Activated naive CD4-positive, alpha-beta T cell treated with anti-CD3 and anti-CD28 coated beads for 36 hours (primary cell): ENCODE measurements at regions of chr11 and their contacts with region 1.

Region 1: GRCh38 chr11:355581-356458 is 13.5 kb upstream of the B4GALNT4 start:
- DNase-seq: peak; percentile 93
- H3K4me3 Mint-ChIP-seq: peak overlapping the region; percentile 94
- H3K27ac Mint-ChIP-seq: peak overlapping the region; percentile 99
- H3K4me1 Mint-ChIP-seq: peaks cover 36% of the 10 kb centered on the region
- H3K27me3 Mint-ChIP-seq: no peaks in the 10 kb centered on the region

Region 2: GRCh38 chr11:199004-199581 is 156.7 kb before region 1 on chr11:
- CTCF ChIA-PET with region 1: no interaction called
- intact Hi-C with region 1: no loop called
- DNase-seq: no peak
- H3K4me3 Mint-ChIP-seq: no peak overlapping the region
- H3K27ac Mint-ChIP-seq: no peak overlapping the region
- H3K4me1 Mint-ChIP-seq: peaks cover 35% of the 10 kb centered on the region
- H3K27me3 Mint-ChIP-seq: no peaks in the 10 kb centered on the region

Region 3: GRCh38 chr11:304915-305843 is 50.6 kb before region 1 on chr11:
- CTCF ChIA-PET with region 1: interaction called, 81 read pairs
- intact Hi-C with region 1: loop called (anchors 1 kb)
- DNase-seq: peak; percentile 85
- H3K4me3 Mint-ChIP-seq: no peak overlapping the region
- H3K27ac Mint-ChIP-seq: no peak overlapping the region
- H3K4me1 Mint-ChIP-seq: peaks cover 38% of the 10 kb centered on the region
- H3K27me3 Mint-ChIP-seq: peaks cover 8% of the 10 kb centered on the region

Region 4: GRCh38 chr11:313787-314547 is 41.9 kb before region 1 on chr11 and contains the start of gene IFITM1:
- CTCF ChIA-PET with region 1: interaction called, 16 read pairs
- intact Hi-C with region 1: loop called (anchors 1 kb)
- DNase-seq: peak; percentile 77
- H3K4me3 Mint-ChIP-seq: peak within 1 kb of the TSS; percentile 93
- H3K27ac Mint-ChIP-seq: peak within 1 kb of the TSS; percentile 95
- H3K4me1 Mint-ChIP-seq: peaks cover 22% of the 10 kb centered on the region
- H3K27me3 Mint-ChIP-seq: no peaks in the 10 kb centered on the region
- total RNA-seq, gene IFITM1: 359 to 378 TPM

Region 5: DNA sequence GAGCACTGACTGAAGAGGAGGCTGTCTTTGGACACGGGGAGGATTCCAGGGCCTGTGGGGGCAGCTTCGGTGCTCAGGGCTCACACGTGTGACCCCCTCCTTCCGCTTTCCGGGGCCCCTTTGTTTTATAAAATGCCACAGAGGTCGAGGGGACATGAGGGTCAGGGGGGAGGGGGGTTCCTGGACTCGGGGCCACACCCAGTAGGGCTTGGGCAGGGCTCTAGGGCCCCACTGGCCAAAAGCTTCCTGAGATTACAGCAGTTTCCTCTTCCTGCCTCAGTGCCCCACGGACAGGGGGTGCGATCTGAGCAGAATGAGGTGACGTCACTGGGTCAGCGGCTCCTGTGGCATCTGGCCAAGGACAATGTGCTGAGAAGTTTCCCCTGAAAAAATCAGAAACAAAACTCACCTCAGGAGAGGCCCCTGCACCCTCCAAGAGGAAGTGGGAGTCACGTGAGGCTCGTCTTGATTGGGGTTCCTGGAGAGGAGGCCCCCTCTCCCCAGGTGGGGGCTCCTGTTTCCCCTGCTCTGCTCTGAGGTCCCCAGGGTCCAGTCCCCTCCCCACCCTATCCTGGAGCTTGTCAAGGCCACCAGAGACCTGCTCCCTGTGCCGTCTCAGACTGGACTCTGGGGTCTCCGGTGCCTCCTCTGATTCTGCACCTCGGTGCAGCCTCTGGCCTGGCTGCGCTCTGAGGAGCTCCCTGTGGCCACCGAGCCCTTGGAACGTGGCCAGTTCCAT is 28.8 kb before region 1 on chr11:
- CTCF ChIA-PET with region 1: interaction called, 13 read pairs
- intact Hi-C with region 1: loop called (anchors 1 kb)
- DNase-seq: peak; percentile 92
- H3K4me3 Mint-ChIP-seq: peak overlapping the region; percentile 72
- H3K27ac Mint-ChIP-seq: peak overlapping the region; percentile 98
- H3K4me1 Mint-ChIP-seq: peaks cover 73% of the 10 kb centered on the region
- H3K27me3 Mint-ChIP-seq: no peaks in the 10 kb centered on the region

Region 6: DNA sequence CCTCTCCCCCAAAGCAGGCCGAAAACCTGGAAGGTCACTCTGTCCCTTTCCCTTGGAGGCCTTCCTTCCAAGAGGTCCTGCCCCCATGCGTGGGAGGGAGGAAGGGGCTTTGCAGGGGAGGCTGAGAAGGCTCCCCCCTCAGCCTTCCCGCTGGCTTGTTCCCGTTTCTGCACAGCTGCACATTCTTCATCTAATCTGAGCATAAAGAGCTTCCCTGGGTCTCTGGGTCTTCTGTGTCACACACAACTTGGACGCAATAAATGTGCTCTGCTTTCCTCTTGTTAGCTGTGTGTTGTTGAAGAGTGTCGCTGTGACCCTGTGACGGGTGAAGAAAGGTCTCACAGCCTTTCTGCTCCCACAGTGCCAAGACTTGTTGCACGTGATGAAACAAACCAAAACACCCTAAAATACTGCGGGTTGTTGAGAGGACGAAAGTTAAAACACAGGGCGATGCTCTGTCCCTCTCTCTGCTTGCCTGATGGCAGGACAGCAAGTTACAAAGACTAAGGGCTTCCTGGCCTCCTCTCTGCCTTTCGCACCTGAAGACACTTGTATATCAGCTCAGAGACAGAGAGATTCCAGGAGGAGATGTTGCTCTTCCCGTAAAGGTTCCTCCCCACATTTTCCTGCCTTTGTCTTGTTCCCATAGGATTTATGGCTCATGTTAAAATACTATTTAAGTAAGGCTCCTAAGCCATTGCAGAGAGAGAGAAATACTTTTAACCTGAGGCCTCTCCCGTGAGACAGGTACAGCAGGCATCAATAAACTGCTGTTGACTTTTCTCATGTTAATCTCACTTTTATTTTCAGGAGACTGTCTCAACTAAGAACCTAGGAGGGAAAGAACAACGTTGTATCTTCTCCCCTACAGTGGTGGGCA is 19.8 kb before region 1 on chr11:
- CTCF ChIA-PET with region 1: interaction called, 5 read pairs
- intact Hi-C with region 1: loop called (anchors 2 kb)
- DNase-seq: no peak
- H3K4me3 Mint-ChIP-seq: no peak overlapping the region
- H3K27ac Mint-ChIP-seq: no peak overlapping the region
- H3K4me1 Mint-ChIP-seq: peaks cover 38% of the 10 kb centered on the region
- H3K27me3 Mint-ChIP-seq: no peaks in the 10 kb centered on the region

Region 7: GRCh38 chr11:568306-569157 is 212.7 kb after region 1 on chr11:
- CTCF ChIA-PET with region 1: no interaction called
- intact Hi-C with region 1: no loop called
- DNase-seq: peak; percentile 89
- H3K4me3 Mint-ChIP-seq: peak overlapping the region; percentile 71
- H3K27ac Mint-ChIP-seq: no peak overlapping the region
- H3K4me1 Mint-ChIP-seq: peaks cover 2% of the 10 kb centered on the region
- H3K27me3 Mint-ChIP-seq: no peaks in the 10 kb centered on the region